Breast epithelium (tissue), 4 donors: ENCODE measurements at regions of chr1 and their contacts with region 1.

Region 1: GRCh38 chr1:84430546-84430945 is 32.3 kb downstream of the DNASE2B start:
- DNase-seq: no peak
- H3K4me3 ChIP-seq: no peak overlapping the region
- H3K27ac ChIP-seq: no peak overlapping the region
- H3K4me1 ChIP-seq: no peaks in the 10 kb centered on the region
- H3K27me3 ChIP-seq: no peaks in the 10 kb centered on the region
- CTCF ChIP-seq: no peak
- POLR2A ChIP-seq: no peak

Region 2: GRCh38 chr1:84415396-84415795 is 15.2 kb before region 1 on chr1:
- intact Hi-C with region 1: loop called (anchors 1 kb)
- DNase-seq: no peak
- H3K4me3 ChIP-seq: no peak overlapping the region
- H3K27ac ChIP-seq: no peak overlapping the region
- H3K4me1 ChIP-seq: no peaks in the 10 kb centered on the region
- H3K27me3 ChIP-seq: no peaks in the 10 kb centered on the region
- CTCF ChIP-seq: no peak
- POLR2A ChIP-seq: no peak